AG04449 (cell line): ENCODE measurements at regions of chr9 and their contacts with region 1.

Region 1: GRCh38 chr9:77764894-77765780 is 117.0 kb upstream of the GNA14 start:
- DNase-seq: peak; percentile 44
- H3K4me3 ChIP-seq: no peak overlapping the region
- CTCF ChIP-seq: peak; percentile 48

Region 2: GRCh38 chr9:77663754-77664153 is 101.4 kb before region 1 on chr9:
- CTCF ChIA-PET with region 1: no interaction called
- POLR2A ChIA-PET with region 1: no interaction called
- DNase-seq: no peak
- H3K4me3 ChIP-seq: no peak overlapping the region
- CTCF ChIP-seq: no peak

Region 3: DNA sequence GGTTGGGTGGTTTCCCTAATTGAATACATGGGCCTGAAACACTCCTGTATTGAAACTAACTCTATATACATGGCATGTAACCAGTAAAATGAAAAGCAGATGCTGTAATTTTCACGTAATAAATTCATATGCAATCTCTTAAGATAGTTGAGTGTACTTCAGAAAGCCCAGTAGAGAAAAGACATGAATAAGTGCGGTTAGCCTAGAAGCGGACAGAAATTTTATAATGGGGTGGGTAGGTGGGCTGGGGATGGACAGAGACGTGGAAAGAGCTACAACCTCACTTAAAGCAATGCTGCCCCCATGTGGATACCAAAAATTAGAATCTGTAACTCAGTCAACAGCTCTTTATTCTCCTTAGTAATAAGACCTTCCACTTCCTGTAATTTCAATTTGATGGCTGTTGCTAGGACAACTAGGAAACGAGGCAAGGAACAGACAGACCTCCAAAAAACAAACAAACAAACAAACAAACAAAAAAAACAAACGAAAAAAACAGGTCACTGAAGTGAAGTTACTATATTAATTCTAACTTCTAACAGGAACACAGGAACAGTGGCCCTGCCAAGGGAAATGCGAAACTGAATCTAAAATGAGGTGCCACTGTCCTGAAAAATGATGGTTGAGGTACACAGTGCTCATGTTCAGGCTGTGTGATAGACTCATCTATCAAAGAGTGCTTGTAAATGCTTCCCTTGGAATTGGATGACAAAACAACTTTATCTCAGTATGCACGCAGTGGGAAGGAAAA is 13.6 kb before region 1 on chr9:
- CTCF ChIA-PET with region 1: interaction called, 41 read pairs
- POLR2A ChIA-PET with region 1: no interaction called
- DNase-seq: peak; percentile 56
- H3K4me3 ChIP-seq: no peak overlapping the region
- CTCF ChIP-seq: peak; percentile 47

Region 4: DNA sequence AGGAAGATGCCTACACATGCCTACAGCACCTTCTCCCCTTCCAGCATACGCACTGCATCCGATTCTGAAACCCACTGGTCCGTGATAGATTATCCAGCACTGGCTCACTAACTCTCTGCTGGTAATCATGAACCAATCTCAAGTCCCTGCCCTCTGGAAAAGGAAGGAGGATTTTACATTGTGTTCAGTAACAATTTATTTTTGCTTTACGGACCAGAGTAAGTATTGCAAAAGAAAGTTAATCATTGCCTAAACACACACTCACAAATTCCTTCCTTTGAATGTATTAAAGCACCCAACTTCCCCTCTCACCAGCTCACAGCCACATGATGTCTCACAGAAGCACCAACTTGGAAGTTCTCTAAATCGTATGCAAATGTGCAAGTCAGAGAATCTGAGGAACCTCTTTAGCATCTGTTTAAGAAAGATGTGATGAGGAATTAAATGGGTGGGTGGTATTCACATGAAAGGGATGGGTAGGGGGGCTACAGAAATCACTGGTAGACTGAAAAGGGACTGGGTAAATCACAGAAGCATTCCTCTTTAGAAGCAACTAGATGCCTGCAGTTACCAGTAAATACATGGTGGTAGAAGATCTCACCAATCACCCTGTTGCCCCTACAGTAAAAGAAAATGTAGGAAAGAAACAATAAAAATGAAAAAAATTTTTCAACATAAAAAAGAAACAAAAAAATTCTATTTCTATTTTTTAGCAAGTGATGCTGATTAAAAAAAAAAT is 258.0 kb after region 1 on chr9:
- CTCF ChIA-PET with region 1: no interaction called
- POLR2A ChIA-PET with region 1: no interaction called
- DNase-seq: peak; percentile 42
- H3K4me3 ChIP-seq: no peak overlapping the region
- CTCF ChIP-seq: no peak